WTC11 (cell line): ENCODE measurements at regions of chr10 and their contacts with region 1.

Region 1: DNA sequence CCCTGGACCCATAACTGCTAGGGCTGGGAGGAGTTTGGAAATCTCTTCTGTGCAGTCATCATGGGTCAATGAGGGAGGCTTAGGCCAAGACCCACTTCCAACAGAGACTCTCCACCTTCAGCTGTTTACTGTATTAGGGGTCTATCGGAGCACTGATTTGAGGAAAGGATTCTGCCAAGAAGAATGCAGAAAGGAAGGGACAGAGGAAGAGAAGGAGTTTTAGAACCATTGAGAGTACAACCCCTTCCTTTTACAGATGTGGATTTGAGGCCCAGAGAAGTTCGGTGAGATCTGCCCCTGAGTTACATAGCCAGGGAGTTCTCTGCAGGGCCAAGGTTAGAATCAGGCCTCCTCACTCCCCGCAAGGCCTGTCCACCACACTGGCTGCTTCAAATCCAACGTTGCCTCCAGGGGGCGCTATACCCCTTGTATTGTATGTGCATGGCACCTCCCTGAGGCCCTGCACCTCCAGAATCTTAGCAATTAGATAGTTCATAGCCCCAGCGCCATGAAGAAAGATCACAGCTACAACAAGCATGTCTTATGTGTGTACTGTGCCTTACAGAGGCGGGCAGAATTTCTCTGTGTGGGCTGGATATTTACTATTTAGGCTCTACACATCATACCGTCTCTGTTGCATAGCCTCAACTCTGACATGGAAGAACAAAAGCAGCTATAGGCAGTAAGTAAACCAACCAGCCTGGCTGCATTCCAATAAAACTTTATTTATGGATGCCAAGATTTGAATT is 246.8 kb downstream of the SKIDA1 start:
- DNase-seq: peak; percentile 98
- ATAC-seq: peak; percentile 80
- H3K4me3 Mint-ChIP-seq: no peak overlapping the region
- H3K27ac Mint-ChIP-seq: peak overlapping the region; percentile 49; the same call in 1 of the 2 replicates
- H3K4me1 Mint-ChIP-seq: peaks cover 49% of the 10 kb centered on the region
- H3K27me3 Mint-ChIP-seq: no peaks in the 10 kb centered on the region
- CTCF ChIP-seq: peak; percentile 97

Region 2: GRCh38 chr10:21249435-21249834 is 29.2 kb before region 1 on chr10:
- CTCF ChIA-PET with region 1: no interaction called
- POLR2A ChIA-PET with region 1: no interaction called
- DNase-seq: no peak
- ATAC-seq: no peak
- H3K4me3 Mint-ChIP-seq: no peak overlapping the region
- H3K27ac Mint-ChIP-seq: no peak overlapping the region
- H3K4me1 Mint-ChIP-seq: no peaks in the 10 kb centered on the region
- H3K27me3 Mint-ChIP-seq: no peaks in the 10 kb centered on the region
- CTCF ChIP-seq: no peak

Region 3: GRCh38 chr10:21304203-21304602 is 25.5 kb after region 1 on chr10:
- CTCF ChIA-PET with region 1: no interaction called
- POLR2A ChIA-PET with region 1: no interaction called
- DNase-seq: no peak
- ATAC-seq: no peak
- H3K4me3 Mint-ChIP-seq: no peak overlapping the region
- H3K27ac Mint-ChIP-seq: peak overlapping the region; percentile 20
- H3K4me1 Mint-ChIP-seq: peaks cover 28% of the 10 kb centered on the region
- H3K27me3 Mint-ChIP-seq: no peaks in the 10 kb centered on the region
- CTCF ChIP-seq: no peak

Region 4: GRCh38 chr10:21336476-21337170 is 58.0 kb after region 1 on chr10:
- CTCF ChIA-PET with region 1: interaction called, 11 read pairs
- POLR2A ChIA-PET with region 1: no interaction called
- DNase-seq: peak; percentile 25
- ATAC-seq: peak; percentile 85
- H3K4me3 Mint-ChIP-seq: no peak overlapping the region
- H3K27ac Mint-ChIP-seq: peak overlapping the region; percentile 97
- H3K4me1 Mint-ChIP-seq: peaks cover 30% of the 10 kb centered on the region
- H3K27me3 Mint-ChIP-seq: no peaks in the 10 kb centered on the region
- CTCF ChIP-seq: no peak